A549 (cell line): ENCODE measurements at regions of chr7 and their contacts with region 1.

Region 1: DNA sequence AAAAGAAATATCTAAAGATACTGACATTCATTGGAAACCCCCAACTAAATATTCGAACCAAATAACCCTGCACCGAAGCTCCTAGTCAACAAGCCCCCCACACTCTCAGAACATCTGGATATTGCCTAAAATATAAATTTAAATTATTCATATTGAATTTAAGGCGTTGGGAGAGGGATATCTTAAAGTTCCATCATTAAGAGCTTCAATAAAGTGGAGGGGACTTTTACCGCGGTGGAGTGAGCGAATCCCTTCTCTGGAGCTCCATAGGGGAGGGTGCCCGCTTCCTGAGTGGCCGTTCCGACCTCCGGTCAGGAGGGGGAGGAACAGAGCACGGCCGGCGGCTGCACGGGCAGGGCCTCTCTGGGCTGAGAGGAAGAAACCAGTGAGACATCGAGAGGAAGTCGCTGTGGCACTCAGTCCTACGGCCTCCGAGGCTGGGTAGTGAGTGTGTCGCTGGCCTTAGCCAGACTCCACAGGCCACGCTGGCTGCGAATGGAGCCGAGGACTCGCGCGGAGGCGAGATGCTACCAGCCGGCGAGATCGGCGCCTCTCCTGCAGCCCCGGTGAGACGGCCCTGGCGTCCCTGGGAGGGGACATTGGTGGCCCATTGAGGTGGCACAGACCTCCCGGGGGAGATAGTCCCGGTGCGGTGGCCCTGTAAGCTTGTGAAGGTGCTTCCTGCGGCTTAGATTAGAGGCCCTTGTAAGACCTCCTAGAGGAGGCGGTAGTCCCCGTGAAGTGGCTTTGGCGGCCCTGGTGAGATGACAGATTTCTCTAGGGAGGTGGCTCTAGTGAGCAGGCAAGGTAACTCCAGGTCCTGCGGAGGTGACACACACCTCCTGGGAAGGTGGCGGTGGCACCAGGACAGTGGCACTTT is at the start of gene RINT1:
- DNase-seq: peak; percentile 84 to 91
- ATAC-seq: peak; percentile 100
- H3K4me3 ChIP-seq: peak within 1 kb of the TSS; percentile 98
- H3K27ac ChIP-seq: peak within 1 kb of the TSS; percentile 95
- H3K4me1 ChIP-seq: peaks cover 13% of the 10 kb centered on the region
- CTCF ChIP-seq: peak; percentile 63
- EP300 ChIP-seq: no peak
- POLR2A ChIP-seq: peak; percentile 98
- RAD21 ChIP-seq: no peak
- polyA plus RNA-seq, gene RINT1: 28.2 and 34.9 TPM in 2 replicates

Region 2: DNA sequence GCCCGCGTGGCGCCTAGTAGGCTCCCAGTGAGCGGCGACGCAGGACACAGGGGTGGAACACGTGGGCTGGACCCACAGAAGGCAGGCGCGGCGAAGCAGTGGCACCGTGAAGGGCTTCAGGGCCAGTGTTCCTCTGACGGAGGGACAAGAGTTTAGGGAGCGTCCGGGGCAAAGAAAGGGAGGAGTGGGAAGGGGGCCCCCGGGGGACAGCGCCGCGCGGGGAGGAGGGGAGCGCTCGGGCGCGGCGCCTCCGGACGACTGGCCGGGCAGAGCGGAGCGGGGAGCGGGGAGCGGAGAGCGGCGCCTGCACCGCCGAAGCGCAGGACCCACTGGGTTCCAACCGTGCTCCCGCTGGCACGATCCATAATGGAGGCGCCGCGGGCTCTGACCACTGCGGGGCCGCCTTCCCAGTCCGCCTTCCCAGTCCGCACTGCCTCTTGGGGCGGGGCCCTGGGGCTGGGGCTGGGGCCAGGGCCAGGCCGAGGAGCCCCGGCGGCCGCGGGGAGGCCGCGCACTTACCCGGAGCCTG is 10.4 kb before region 1 on chr7:
- CTCF ChIA-PET with region 1: interaction called, 39 read pairs
- POLR2A ChIA-PET with region 1: interaction called, 5 read pairs
- DNase-seq: peak; percentile 53 to 86
- ATAC-seq: peak; percentile 97
- H3K4me3 ChIP-seq: peak overlapping the region; percentile 89
- H3K27ac ChIP-seq: peak overlapping the region; percentile 91 to 92
- H3K4me1 ChIP-seq: peaks cover 16% of the 10 kb centered on the region; the same call in 2 of the 3 replicates
- CTCF ChIP-seq: no peak; the same call in 2 of the 3 replicates
- EP300 ChIP-seq: no peak
- POLR2A ChIP-seq: no peak; the same call in 1 of the 2 replicates
- RAD21 ChIP-seq: no peak